ENCODE measurements at regions of chr15 and their contacts with region 1.

Region 1: GRCh38 chr15:39756806-39757522 is 25.7 kb downstream of the FSIP1 start:
- DNase-seq: no peak
- CTCF ChIP-seq: peak; percentile 73

Region 2: GRCh38 chr15:39580117-39580484 is 176.9 kb before region 1 on chr15:
- CTCF ChIA-PET with region 1: interaction called, 21 read pairs
- POLR2A ChIA-PET with region 1: no interaction called
- DNase-seq: peak; percentile 87
- CTCF ChIP-seq: peak; percentile 96

Region 3: GRCh38 chr15:39686000-39686613 is 70.9 kb before region 1 on chr15:
- CTCF ChIA-PET with region 1: interaction called, 53 read pairs
- POLR2A ChIA-PET with region 1: no interaction called
- DNase-seq: peak; percentile 40
- CTCF ChIP-seq: peak; percentile 71

Region 4: GRCh38 chr15:39770748-39771689 is 14.1 kb after region 1 on chr15:
- CTCF ChIA-PET with region 1: interaction called, 41 read pairs
- POLR2A ChIA-PET with region 1: no interaction called
- DNase-seq: no peak
- CTCF ChIP-seq: no peak